ENCODE measurements at regions of chr20 and their contacts with region 1.

Region 1: DNA sequence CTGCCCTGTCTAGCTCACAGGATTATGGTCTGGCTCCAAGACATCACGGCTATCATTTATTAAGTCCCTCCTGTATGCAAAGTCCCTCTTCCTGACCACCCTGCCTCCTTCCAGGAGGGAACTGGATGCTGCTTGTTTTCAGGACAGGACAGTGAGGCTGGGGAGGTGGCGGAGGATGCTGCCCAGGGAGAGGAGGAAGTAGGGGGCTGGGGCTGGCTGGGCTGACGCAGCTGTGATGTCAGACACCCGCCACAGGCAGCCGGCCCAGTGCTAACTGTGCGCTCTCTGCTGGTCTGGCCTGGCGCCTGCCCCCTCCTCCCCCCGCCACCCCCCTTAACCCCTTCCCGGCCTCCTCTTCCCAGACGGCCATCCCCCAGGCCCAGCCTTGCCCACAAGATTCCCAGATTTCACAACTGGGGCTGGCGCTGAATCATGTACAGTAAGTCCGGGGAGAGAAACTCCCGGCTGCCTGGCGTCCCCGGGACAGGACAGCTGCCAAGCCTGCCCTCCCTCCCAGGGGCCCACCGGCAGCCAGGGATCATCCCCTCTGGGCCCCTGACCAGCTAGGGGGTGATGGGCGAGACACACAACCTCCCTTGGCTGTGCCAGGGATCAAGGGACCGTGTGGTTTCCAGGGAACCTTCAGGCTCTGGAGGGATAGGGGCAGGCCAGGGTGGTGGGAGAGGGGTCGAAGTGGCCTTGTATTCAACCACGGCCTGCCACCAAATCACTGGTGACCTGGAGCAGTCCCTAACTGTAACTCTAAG is 118.1 kb downstream of the CEBPB start:
- DNase-seq: peak; percentile 96
- ATAC-seq: peak; percentile 15
- H3K4me3 ChIP-seq: peak overlapping the region; percentile 53 to 78 (median 61)
- H3K27ac ChIP-seq: peak overlapping the region; percentile 75
- H3K4me1 ChIP-seq: peaks cover 66% of the 10 kb centered on the region
- H3K27me3 ChIP-seq: no peaks in the 10 kb centered on the region
- CTCF ChIP-seq: peak; percentile 67
- EP300 ChIP-seq: peak in 1 of 2 experiments; percentile 62; a peak in 3 of 4 replicates
- POLR2A ChIP-seq: peak in 1 of 2 experiments; percentile 11; a peak in 2 of 4 replicates
- RAD21 ChIP-seq: peak; percentile 46

Region 2: GRCh38 chr20:50278674-50279531 is 29.8 kb before region 1 on chr20:
- CTCF ChIA-PET with region 1: interaction called, 4 read pairs
- POLR2A ChIA-PET with region 1: interaction called, 56 read pairs
- in situ Hi-C with region 1: no loop called
- intact Hi-C with region 1: loop called (anchors 5 kb)
- DNase-seq: peak; percentile 87
- ATAC-seq: peak; percentile 72
- H3K4me3 ChIP-seq: peak overlapping the region in 2 of 3 experiments; percentile 2 to 36; a peak in 1 of 6 replicates
- H3K27ac ChIP-seq: no peak overlapping the region
- H3K4me1 ChIP-seq: peaks cover 96% of the 10 kb centered on the region
- H3K27me3 ChIP-seq: no peaks in the 10 kb centered on the region
- CTCF ChIP-seq: peak; percentile 89
- EP300 ChIP-seq: peak in 1 of 2 experiments; percentile 47; a peak in 1 of 4 replicates
- POLR2A ChIP-seq: no peak
- RAD21 ChIP-seq: peak; percentile 96

Region 3: DNA sequence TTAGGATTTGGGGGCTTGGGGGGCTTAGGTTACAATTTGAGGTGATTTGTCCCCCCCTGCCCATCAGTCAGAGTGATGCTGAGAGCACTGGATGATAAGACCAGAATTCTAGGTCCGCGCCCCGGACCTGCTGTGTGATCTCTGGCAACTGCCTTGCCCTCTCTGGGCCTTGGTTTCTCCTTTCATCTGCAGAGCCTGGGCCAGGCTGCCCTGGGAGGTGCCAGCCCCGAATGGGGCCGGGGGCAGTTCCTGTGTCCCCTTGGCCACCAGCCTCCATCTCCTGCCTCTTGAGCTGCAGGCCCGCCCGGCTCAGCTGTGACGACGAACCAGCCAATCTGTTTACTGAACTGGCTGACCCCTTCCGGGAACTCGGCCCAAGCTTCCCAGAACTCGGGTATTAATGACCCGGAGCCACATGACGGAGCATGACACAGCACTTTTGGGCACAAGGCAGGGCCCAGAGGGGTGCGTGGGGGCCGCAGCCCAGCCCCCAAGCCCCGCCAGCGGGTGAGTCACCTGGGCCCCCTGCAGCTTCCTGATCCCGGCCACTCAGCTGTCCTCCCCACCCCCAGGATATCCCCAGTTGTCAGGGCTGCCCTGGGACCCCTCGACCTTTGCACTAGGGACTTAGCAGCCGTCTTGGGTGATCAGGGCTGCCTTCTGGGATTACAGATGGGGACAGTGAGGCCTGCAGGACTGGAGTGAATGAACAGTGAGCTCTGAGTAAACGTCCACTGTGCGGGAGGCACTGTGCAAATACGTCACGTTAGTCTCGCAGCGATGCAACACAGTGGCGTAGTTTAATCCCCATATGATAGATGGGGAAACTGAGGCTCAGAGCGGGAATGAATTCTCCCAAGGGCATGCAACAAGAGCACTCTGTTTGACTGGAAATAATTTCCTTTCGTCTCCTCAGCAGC is 16.1 kb before region 1 on chr20:
- CTCF ChIA-PET with region 1: no interaction called
- POLR2A ChIA-PET with region 1: interaction called, 178 read pairs
- in situ Hi-C with region 1: no loop called
- intact Hi-C with region 1: loop called (anchors 1 kb)
- DNase-seq: peak; percentile 97
- ATAC-seq: peak; percentile 69
- H3K4me3 ChIP-seq: peak overlapping the region in 1 of 3 experiments; percentile 39; a peak in 3 of 6 replicates
- H3K27ac ChIP-seq: peak overlapping the region; percentile 77
- H3K4me1 ChIP-seq: peaks cover 68% of the 10 kb centered on the region
- H3K27me3 ChIP-seq: no peaks in the 10 kb centered on the region
- CTCF ChIP-seq: peak; percentile 41
- EP300 ChIP-seq: peak; percentile 96 to 99
- POLR2A ChIP-seq: peak in 1 of 2 experiments; percentile 14; a peak in 2 of 4 replicates
- RAD21 ChIP-seq: peak; percentile 63

Region 4: DNA sequence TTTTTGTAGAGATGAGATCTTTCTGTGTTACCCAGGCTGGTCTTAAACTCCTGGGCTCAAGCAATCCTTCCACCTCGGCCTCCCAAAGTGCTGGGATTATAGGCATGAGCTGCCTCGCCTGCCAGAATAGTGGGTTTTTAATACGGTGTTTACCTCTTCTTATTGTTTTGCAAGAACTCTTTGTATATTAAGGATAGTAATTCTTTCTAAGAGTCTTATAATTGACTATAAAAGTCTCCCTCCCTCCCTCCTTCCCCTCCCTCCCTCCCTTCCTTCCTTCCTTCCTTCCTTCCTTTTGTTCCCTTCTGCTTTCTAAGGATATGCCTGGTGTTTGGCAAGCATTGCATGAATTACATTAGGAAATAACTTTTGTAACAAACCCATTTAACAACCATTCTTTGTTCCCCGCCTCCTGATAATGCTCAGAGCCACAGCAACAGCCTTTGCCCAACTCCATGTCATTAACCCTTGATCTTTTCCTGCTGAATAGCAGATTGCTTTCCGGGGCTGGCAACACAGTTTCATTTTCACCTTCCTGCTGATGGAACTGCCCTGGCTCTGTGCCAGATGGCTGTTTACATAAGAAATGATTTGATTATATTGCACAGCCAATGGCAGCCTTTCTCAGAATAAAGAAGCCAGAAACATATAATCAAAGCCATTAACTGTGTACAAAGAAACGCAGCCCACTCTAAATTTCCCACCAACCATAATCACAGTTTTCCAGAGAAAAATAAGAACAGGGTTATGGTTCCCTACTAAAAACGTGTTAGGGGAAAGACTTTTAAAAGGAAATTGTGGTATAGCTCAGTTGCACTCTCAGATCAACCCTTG is 57.8 kb after region 1 on chr20:
- CTCF ChIA-PET with region 1: no interaction called
- POLR2A ChIA-PET with region 1: interaction called, 12 read pairs
- in situ Hi-C with region 1: no loop called
- intact Hi-C with region 1: no loop called
- DNase-seq: peak; percentile 100
- ATAC-seq: peak; percentile 77
- H3K4me3 ChIP-seq: peak overlapping the region in 2 of 3 experiments; percentile 29 to 31; a peak in 2 of 6 replicates
- H3K27ac ChIP-seq: peak overlapping the region; percentile 71
- H3K4me1 ChIP-seq: peaks cover 87% of the 10 kb centered on the region
- H3K27me3 ChIP-seq: peaks cover 0 to 12% of the 10 kb centered on the region in 2 experiments; a peak in 3 of 5 replicates
- CTCF ChIP-seq: 0 out of 2 replicates have a peak, but pooled peaks have one; percentile 11
- EP300 ChIP-seq: peak; percentile 79 to 93
- POLR2A ChIP-seq: no peak
- RAD21 ChIP-seq: peak; percentile 8; the same call in 1 of the 2 replicates

Region 5: GRCh38 chr20:50460460-50461267 is 152.0 kb after region 1 on chr20:
- CTCF ChIA-PET with region 1: no interaction called
- POLR2A ChIA-PET with region 1: interaction called, 4 read pairs
- in situ Hi-C with region 1: no loop called
- intact Hi-C with region 1: loop called (anchors 5 kb)
- DNase-seq: peak; percentile 91
- ATAC-seq: peak; percentile 85
- H3K4me3 ChIP-seq: peak overlapping the region; percentile 15 to 64 (median 35); a peak in 5 of 6 replicates
- H3K27ac ChIP-seq: peak overlapping the region; percentile 45
- H3K4me1 ChIP-seq: peaks cover 89% of the 10 kb centered on the region
- H3K27me3 ChIP-seq: no peaks in the 10 kb centered on the region
- CTCF ChIP-seq: peak; percentile 100
- EP300 ChIP-seq: peak in 1 of 2 experiments; percentile 60; a peak in 3 of 4 replicates
- POLR2A ChIP-seq: peak in 1 of 2 experiments; percentile 28; a peak in 1 of 4 replicates
- RAD21 ChIP-seq: peak; percentile 100